MCF 10A (cell line): ENCODE measurements at regions of chr15 and their contacts with region 1.

Region 1: GRCh38 chr15:39171944-39172368 is 408.9 kb upstream of the THBS1 start:
- DNase-seq: peak; percentile 97
- H3K4me3 Mint-ChIP-seq: no peak overlapping the region
- H3K27ac Mint-ChIP-seq: no peak overlapping the region
- H3K4me1 Mint-ChIP-seq: peaks cover 22% of the 10 kb centered on the region
- H3K27me3 Mint-ChIP-seq: no peaks in the 10 kb centered on the region
- CTCF ChIP-seq: peak; percentile 76

Region 2: GRCh38 chr15:38817427-38818156 is 354.4 kb before region 1 on chr15:
- CTCF ChIA-PET with region 1: interaction called, 4 read pairs
- POLR2A ChIA-PET with region 1: no interaction called
- intact Hi-C with region 1: loop called (anchors 1 kb)
- DNase-seq: peak; percentile 85
- H3K4me3 Mint-ChIP-seq: no peak overlapping the region
- H3K27ac Mint-ChIP-seq: no peak overlapping the region
- H3K4me1 Mint-ChIP-seq: no peaks in the 10 kb centered on the region
- H3K27me3 Mint-ChIP-seq: no peaks in the 10 kb centered on the region
- CTCF ChIP-seq: peak; percentile 100

Region 3: GRCh38 chr15:39301589-39301999 is 129.6 kb after region 1 on chr15:
- CTCF ChIA-PET with region 1: no interaction called
- POLR2A ChIA-PET with region 1: no interaction called
- intact Hi-C with region 1: loop called (anchors 1 kb)
- DNase-seq: peak; percentile 65
- H3K4me3 Mint-ChIP-seq: no peak overlapping the region
- H3K27ac Mint-ChIP-seq: peak overlapping the region; percentile 69
- H3K4me1 Mint-ChIP-seq: peaks cover 40% of the 10 kb centered on the region
- H3K27me3 Mint-ChIP-seq: no peaks in the 10 kb centered on the region
- CTCF ChIP-seq: no peak

Region 4: DNA sequence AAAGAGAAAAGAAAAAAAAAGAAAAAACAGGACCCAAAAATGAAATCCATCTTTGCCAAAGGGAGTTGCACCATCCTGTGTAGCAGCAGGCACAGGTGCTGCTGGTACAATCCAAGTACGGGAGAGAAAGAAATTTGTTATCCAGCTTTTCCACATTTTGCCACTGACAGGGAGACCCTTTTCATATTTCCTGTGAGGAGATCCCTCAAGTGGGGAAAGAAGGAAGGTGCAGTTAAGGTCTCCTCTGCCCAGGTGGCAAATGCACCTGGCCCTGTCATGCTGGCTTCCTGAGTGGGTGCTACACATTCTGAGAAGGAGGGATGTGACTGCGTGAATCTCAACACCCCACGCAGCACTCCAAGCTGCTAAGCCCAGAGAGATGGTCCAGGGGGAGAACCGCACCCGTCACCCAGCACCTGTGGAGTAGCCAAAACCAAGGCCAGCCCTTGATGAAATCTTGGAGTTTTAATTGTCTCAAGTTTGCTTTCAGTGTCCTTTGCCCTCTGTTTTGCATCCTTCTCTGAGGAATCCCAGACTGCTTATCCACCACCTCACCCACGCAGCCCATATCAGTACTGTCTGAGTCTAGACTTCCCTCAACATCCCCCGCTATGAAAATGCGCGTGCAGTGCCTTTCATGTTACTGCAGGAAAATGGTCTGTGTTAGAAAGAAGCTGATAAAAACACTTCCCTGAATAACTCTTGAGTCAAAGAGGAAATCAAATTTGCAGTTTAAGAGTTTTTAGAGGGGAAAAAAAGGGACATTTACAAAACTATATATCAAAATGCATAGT is 267.0 kb after region 1 on chr15:
- CTCF ChIA-PET with region 1: interaction called, 13 read pairs
- POLR2A ChIA-PET with region 1: no interaction called
- intact Hi-C with region 1: loop called (anchors 2 kb)
- DNase-seq: peak; percentile 35
- H3K4me3 Mint-ChIP-seq: no peak overlapping the region
- H3K27ac Mint-ChIP-seq: no peak overlapping the region
- H3K4me1 Mint-ChIP-seq: peaks cover 9% of the 10 kb centered on the region
- H3K27me3 Mint-ChIP-seq: no peaks in the 10 kb centered on the region
- CTCF ChIP-seq: peak; percentile 17

Region 5: DNA sequence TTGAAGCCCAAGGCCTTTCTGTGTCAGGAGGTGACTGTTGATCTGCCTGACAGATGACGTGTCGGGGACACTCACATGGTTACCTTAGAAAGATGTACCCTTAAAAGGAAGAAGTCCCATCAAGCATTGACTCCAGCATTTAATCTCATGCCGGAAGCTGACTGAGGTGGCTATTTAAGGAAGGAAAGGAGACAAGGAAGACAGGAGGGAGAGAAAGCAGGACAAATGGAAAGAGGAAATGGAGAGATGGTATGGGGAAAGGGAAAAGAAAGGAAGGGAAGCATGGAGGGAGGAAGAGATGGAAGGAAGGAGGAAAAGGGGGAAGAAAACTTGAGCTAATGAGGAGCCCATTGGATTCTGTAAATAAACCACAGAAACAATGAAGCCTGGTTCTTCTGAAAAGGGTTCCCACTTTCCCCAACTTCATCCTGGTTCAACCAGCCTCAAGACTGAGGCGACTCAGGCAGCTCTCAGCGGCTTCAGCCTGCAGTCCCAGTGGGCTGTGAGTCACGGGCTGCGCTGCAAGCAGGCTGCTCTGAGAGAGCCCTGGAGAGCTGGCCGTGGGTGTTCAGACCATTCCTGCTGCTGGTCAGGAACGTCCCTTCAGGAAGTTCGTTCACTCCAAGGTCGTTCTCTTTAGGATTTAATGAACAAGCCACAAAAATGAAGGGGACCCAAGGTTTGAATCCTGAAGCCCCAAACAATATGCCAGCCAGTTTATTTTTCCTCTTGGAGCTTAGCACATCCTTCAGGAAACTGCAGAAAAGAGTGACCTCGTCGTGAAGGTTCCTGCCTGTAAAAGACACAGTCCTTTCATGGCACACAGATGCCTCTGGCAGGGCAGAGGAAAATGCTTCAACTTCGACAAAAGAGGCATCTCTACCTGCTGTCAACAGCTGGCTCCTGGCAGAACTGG is 339.3 kb after region 1 on chr15:
- CTCF ChIA-PET with region 1: no interaction called
- POLR2A ChIA-PET with region 1: interaction called, 3 read pairs
- intact Hi-C with region 1: loop called (anchors 5 kb)
- DNase-seq: peak; percentile 64
- H3K4me3 Mint-ChIP-seq: no peak overlapping the region
- H3K27ac Mint-ChIP-seq: no peak overlapping the region
- H3K4me1 Mint-ChIP-seq: peaks cover 16% of the 10 kb centered on the region
- H3K27me3 Mint-ChIP-seq: no peaks in the 10 kb centered on the region
- CTCF ChIP-seq: no peak

Region 6: GRCh38 chr15:39586387-39587171 is 414.6 kb after region 1 on chr15:
- CTCF ChIA-PET with region 1: interaction called, 123 read pairs
- POLR2A ChIA-PET with region 1: interaction called, 69 read pairs
- intact Hi-C with region 1: no loop called
- DNase-seq: peak; percentile 55
- H3K4me3 Mint-ChIP-seq: no peak overlapping the region
- H3K27ac Mint-ChIP-seq: peak overlapping the region; percentile 75
- H3K4me1 Mint-ChIP-seq: peaks cover 41% of the 10 kb centered on the region
- H3K27me3 Mint-ChIP-seq: no peaks in the 10 kb centered on the region
- CTCF ChIP-seq: no peak